OCI-LY7 (cell line): ENCODE measurements at regions of chr18 and their contacts with region 1.

Region 1: DNA sequence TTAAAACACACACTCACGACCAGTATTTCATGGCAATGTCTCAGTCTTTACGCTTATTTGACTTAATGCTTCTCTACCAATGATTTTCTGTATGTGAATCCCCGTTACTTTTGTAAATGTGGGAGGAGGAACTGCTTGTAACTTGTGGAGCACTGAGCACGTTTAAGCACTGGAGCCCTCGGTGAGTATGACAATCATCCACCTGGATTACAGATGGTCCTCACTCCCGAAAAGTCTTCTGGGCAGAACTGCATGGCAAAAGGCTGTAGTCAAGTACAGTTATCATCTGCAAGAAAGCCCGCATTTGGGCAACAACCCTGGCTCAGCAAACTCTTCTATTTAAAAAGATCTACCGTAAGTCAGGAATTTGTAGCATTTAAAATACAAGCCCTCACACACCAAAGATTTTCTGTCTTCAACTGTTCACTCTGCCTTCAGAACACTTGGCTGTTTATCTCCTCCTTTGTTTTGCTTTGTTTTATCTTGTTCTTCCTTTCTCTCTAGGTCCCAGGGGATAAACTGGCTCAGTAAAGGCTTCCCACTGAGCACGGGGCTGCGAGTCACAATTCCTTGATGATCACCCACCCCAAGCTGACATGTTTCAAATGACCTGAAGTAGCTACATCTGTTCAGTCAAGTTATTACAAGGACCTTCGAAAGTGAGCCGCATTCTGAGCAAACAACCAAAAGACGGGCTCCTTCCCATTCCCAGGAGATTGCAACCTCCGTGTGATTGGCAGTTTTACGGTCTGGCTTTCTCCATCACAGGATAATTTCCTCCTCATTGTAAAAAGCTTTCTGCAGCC is 102.2 kb downstream of the DLGAP1 start:
- DNase-seq: no peak
- H3K4me3 ChIP-seq: no peak overlapping the region
- H3K27ac ChIP-seq: no peak overlapping the region
- H3K4me1 ChIP-seq: no peaks in the 10 kb centered on the region
- CTCF ChIP-seq: no peak

Region 2: GRCh38 chr18:4510711-4511110 is 157.8 kb after region 1 on chr18:
- CTCF ChIA-PET with region 1: no interaction called
- POLR2A ChIA-PET with region 1: no interaction called
- intact Hi-C with region 1: loop called (anchors 10 kb)
- DNase-seq: peak; percentile 4
- H3K4me3 ChIP-seq: no peak overlapping the region
- H3K27ac ChIP-seq: no peak overlapping the region
- H3K4me1 ChIP-seq: no peaks in the 10 kb centered on the region
- CTCF ChIP-seq: no peak

Region 3: DNA sequence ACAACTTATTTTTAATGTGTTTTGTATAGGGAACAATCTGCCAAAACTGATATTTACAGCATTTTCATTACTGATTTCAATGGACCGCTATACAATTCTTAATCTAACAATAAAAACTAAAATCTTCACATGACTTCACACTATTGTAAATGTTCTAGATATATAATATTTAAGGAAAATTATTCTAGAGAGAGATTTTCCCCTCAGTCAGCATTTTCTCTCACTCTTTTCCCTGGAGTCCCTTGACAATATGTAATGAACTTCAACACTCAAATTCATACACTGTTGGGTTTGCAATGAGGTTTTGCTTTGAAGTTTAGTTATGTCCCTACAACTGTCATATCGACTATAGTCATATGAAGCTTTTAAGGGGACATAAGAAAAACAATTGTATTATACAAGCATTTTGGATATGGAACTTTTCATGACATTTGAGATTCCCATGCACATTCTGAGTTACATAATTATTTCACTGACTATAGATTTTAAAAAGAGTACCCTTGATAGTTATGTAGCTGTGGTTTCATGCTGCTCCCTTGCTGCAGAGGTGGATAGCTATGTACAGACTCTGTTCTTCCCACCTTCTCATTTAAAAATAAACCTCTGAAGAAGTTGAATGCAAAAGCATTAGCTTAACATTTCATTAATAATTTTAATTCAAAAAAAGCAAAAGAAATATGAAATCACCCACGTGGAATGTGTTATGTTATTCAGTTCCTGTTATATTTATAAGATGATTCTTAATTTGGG is 505.6 kb after region 1 on chr18:
- CTCF ChIA-PET with region 1: no interaction called
- POLR2A ChIA-PET with region 1: no interaction called
- intact Hi-C with region 1: no loop called
- DNase-seq: no peak
- H3K4me3 ChIP-seq: no peak overlapping the region
- H3K27ac ChIP-seq: no peak overlapping the region
- H3K4me1 ChIP-seq: no peaks in the 10 kb centered on the region
- CTCF ChIP-seq: no peak